GM18951 (cell line): ENCODE measurements at regions of chr4 and their contacts with region 1.

Region 1: GRCh38 chr4:162497564-162498167 is 333.9 kb upstream of the FSTL5 start:
- POLR2A ChIP-seq: no peak

Region 2: DNA sequence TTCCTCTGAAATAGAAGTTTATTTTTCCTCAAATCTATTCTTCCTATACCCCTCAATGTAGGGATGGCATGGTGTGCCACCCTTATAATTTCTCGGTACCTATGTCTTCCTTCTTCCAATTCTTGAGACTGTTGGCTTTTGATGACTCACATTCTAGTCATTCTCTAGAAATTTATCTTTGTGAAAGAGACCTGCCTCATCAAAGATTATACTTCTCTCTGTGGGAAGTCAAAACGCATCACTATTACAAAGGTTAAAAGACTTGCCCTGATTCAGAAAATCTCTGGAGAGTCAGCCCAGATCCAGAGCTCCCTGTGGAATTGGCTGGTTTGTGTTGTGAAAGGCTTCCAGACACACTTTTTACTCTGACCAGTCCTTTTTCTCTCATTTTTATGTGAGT is 268.0 kb before region 1 on chr4:
- in situ Hi-C with region 1: no loop called
- POLR2A ChIP-seq: no peak

Region 3: GRCh38 chr4:163048447-163048846 is 550.8 kb after region 1 on chr4:
- in situ Hi-C with region 1: loop called (anchors 25 kb)
- POLR2A ChIP-seq: no peak